ENCODE measurements at regions of chr10 and their contacts with region 1.

Region 1: GRCh38 chr10:14843327-14843988 is 5.4 kb downstream of the HSPA14 start:
- DNase-seq: no peak
- ATAC-seq: no peak
- H3K4me3 Mint-ChIP-seq: no peak overlapping the region
- H3K27ac Mint-ChIP-seq: no peak overlapping the region
- H3K4me1 Mint-ChIP-seq: peaks cover 27% of the 10 kb centered on the region
- H3K27me3 Mint-ChIP-seq: no peaks in the 10 kb centered on the region
- CTCF ChIP-seq: no peak

Region 2: GRCh38 chr10:14859775-14860174 is 16.3 kb after region 1 on chr10:
- CTCF ChIA-PET with region 1: interaction called, 3 read pairs
- POLR2A ChIA-PET with region 1: interaction called, 14 read pairs
- intact Hi-C with region 1: no loop called
- DNase-seq: no peak
- ATAC-seq: no peak
- H3K4me3 Mint-ChIP-seq: no peak overlapping the region
- H3K27ac Mint-ChIP-seq: no peak overlapping the region
- H3K4me1 Mint-ChIP-seq: no peaks in the 10 kb centered on the region
- H3K27me3 Mint-ChIP-seq: no peaks in the 10 kb centered on the region
- CTCF ChIP-seq: no peak